Activated CD4-positive, alpha-beta T cell treated with anti-CD3 and anti-CD28 coated beads for 36 hours (primary cell): ENCODE measurements at regions of chr1 and their contacts with region 1.

Region 1: GRCh38 chr1:54199765-54200518 is at the starts of genes CYB5RL and MRPL37:
- DNase-seq: peak; percentile 94
- ATAC-seq: peak; percentile 99
- H3K4me3 Mint-ChIP-seq: peak within 1 kb of the TSS; percentile 83
- H3K27ac Mint-ChIP-seq: peak within 1 kb of the TSS; percentile 84
- H3K4me1 Mint-ChIP-seq: peaks cover 30% of the 10 kb centered on the region
- H3K27me3 Mint-ChIP-seq: no peaks in the 10 kb centered on the region
- total RNA-seq, gene CYB5RL: 13.1 to 13.5 TPM
- total RNA-seq, gene MRPL37: 177 to 189 TPM

Region 2: GRCh38 chr1:54180701-54181360 is 19.1 kb before region 1 on chr1:
- CTCF ChIA-PET with region 1: interaction called, 16 read pairs
- POLR2A ChIA-PET with region 1: no interaction called
- intact Hi-C with region 1: no loop called
- DNase-seq: no peak
- ATAC-seq: no peak
- H3K4me3 Mint-ChIP-seq: no peak overlapping the region
- H3K27ac Mint-ChIP-seq: no peak overlapping the region
- H3K4me1 Mint-ChIP-seq: no peaks in the 10 kb centered on the region
- H3K27me3 Mint-ChIP-seq: no peaks in the 10 kb centered on the region

Region 3: GRCh38 chr1:54350360-54350759 is 150.4 kb after region 1 on chr1:
- CTCF ChIA-PET with region 1: no interaction called
- POLR2A ChIA-PET with region 1: no interaction called
- intact Hi-C with region 1: loop called in 1 of 2 experiments (anchors 5 kb)
- DNase-seq: no peak
- ATAC-seq: no peak
- H3K4me3 Mint-ChIP-seq: no peak overlapping the region
- H3K27ac Mint-ChIP-seq: no peak overlapping the region
- H3K4me1 Mint-ChIP-seq: peaks cover 53% of the 10 kb centered on the region
- H3K27me3 Mint-ChIP-seq: no peaks in the 10 kb centered on the region

Region 4: GRCh38 chr1:54400329-54400728 is 200.4 kb after region 1 on chr1:
- CTCF ChIA-PET with region 1: interaction called, 3 read pairs
- POLR2A ChIA-PET with region 1: no interaction called
- intact Hi-C with region 1: loop called in 1 of 2 experiments (anchors 2 kb)
- DNase-seq: peak; percentile 67
- ATAC-seq: peak; percentile 70
- H3K4me3 Mint-ChIP-seq: peak overlapping the region; percentile 15
- H3K27ac Mint-ChIP-seq: peak overlapping the region; percentile 64
- H3K4me1 Mint-ChIP-seq: peaks cover 71% of the 10 kb centered on the region
- H3K27me3 Mint-ChIP-seq: no peaks in the 10 kb centered on the region

Region 5: DNA sequence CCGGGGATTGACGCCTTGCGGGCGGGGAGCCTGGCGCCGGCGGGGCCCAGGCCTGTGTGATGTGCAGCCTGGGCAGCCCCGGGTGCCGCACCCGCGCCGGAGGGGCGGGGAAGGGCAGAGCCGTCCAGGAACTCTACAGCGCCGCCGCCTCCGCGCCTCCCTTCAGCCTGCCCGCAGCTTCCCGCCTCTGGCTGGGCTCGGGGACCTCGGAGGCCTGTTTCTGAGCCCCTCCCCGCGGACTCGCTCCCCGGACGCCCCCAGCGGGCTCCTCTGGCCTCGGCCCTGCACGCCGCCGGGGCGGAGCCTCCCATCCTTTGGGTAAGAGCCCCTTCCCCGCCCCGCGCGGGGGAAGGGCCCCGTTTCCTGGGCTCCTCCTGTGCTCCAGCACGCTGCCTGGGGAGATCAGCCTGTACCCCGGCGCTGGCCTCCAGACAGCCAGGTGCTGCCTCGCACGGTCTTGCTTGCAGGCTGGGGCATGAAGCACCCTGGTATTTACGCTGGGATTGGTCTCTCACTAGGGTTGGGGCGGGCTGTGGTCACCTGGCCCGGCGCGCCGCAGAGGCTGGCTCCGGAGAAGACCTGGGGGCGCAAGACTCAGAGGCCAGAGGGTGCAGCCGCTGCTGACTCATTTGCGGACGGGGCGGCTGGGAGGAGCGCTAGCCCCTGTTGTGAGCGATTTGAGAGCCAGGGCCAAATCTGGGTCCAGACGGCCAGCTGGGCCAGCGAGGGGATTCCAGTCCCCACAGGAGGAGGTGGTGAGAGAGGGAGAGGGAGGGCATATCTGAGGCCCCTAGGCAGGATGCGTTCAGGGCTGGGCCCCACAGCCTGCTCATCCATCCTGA is 342.4 kb after region 1 on chr1:
- CTCF ChIA-PET with region 1: no interaction called
- POLR2A ChIA-PET with region 1: no interaction called
- intact Hi-C with region 1: loop called in 1 of 2 experiments (anchors 1 kb)
- DNase-seq: peak; percentile 79
- ATAC-seq: peak; percentile 89
- H3K4me3 Mint-ChIP-seq: peak overlapping the region; percentile 74
- H3K27ac Mint-ChIP-seq: peak overlapping the region; percentile 58
- H3K4me1 Mint-ChIP-seq: peaks cover 18% of the 10 kb centered on the region
- H3K27me3 Mint-ChIP-seq: peaks cover 2% of the 10 kb centered on the region